ENCODE measurements at regions of chr18 and their contacts with region 1.

Region 1: DNA sequence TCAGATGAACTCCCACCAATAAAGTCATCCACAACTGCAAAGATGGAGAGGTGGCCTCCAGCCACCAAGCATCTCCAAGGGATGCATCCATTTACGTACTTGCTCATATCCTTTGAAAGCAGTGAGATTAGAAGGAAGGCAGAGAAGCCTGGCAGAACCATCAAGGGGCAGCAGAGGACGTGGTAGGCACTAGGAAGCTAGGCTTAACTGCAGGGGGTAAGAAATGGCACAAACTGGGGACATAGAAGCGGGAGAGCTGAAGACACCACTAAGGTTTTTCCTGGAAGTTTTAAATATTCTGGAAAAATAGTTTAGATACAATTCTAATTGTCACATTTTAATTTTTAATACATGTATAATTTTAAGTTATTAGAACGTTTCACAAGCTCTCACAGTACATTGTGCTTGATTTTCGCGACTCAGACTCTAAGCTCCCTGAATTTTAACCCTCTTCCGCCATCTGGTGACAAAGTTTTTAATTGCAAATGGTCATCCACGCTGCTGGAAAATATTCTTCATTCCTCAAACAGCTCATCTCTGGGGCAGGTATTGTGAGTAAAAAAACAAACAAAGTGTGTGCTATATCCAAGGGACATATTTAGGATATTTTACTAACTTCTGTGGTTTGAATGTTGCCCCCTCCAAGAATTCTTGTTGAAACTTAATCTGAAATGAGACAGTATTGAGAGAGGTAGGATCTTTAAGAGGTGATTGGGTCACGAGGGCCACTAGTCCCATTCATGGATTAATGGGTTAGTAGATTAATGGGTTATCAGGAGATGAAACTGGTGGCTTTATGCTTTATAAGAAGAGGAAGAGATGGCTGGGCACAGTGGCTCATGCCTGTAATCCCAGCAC is 1.6 kb upstream of the PSTPIP2 start:
- DNase-seq: peak in 1 of 3 donors; percentile 82
- ATAC-seq: peak; percentile 52
- H3K4me3 ChIP-seq: no peak overlapping the region
- H3K4me1 ChIP-seq: peaks cover 7% of the 10 kb centered on the region
- CTCF ChIP-seq: peak; percentile 47

Region 2: DNA sequence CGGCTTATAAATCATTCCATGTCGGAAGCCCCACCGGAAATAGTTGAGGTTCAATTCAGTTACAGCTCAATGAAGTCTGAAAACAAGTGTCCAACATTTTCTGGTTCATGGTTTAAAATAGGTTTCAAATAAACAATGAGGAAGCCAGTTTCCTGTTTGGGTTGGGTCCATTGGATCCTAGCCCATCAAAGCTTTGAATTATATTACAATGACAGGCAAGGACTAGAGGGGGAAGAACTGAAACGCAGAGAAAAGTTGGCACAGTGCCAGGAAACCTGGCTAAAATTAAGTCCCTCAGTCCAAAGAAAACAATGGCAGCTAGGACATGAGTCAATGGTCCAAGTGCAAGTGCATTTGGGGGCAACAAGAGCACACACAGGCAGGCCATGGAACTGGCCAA is 317.8 kb before region 1 on chr18:
- intact Hi-C with region 1: no loop called
- DNase-seq: peak in 1 of 3 donors; percentile 23
- ATAC-seq: no peak
- H3K4me3 ChIP-seq: no peak overlapping the region
- H3K4me1 ChIP-seq: no peaks in the 10 kb centered on the region
- CTCF ChIP-seq: no peak

Region 3: GRCh38 chr18:45802608-45803492 is 270.9 kb before region 1 on chr18:
- intact Hi-C with region 1: no loop called
- DNase-seq: no peak
- ATAC-seq: peak; percentile 55
- H3K4me3 ChIP-seq: no peak overlapping the region
- H3K4me1 ChIP-seq: no peaks in the 10 kb centered on the region
- CTCF ChIP-seq: no peak

Region 4: DNA sequence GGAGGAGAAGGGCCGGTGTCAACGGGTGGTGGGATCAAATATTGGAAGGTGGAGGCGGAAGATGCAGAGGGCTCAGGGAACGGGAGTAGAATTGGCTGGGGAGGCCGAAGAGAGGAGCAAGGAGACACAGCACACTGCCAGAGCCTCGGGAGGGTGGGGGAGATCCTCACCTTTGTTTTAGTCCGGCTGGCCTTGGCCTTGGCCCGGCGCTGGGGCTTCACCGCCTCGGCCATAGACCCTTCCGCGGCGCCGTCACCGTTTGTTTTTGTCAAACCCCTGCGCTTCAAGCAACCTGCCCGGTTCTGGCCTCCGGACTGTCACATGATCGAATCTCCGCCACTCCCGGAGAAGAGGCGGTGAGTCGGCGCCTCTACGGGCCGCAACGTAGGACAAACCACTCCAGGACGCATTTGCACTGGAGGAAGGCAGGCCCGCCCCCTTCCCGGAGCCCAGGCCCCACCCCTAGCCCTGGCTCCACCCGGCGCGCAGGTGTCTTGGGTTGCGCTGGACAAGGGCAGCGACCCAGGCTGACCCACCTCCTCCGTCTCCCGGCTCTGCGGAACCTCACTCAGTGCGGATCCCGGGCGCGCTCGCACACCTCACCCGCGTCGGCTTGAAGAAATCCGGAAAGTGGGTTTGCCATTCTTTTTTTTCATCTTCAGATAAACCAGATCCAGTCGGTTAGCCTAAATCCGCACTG is 106.5 kb before region 1 on chr18 and contains the start of gene EPG5:
- intact Hi-C with region 1: loop called in 1 of 2 experiments (anchors 10 kb)
- DNase-seq: peak; percentile 98
- ATAC-seq: peak; percentile 100
- H3K4me3 ChIP-seq: peak within 1 kb of the TSS; percentile 52
- H3K4me1 ChIP-seq: peaks cover 13% of the 10 kb centered on the region
- CTCF ChIP-seq: no peak
- total RNA-seq, gene EPG5: 21.7 to 29.0 (median 25.6) TPM

Measured in mucosa of descending colon (tissue), 3 donors.